ENCODE measurements at regions of chr6 and their contacts with region 1.

Region 1: GRCh38 chr6:15776458-15776980 is 113.7 kb upstream of the DTNBP1 start:
- DNase-seq: peak; percentile 71
- H3K4me3 Mint-ChIP-seq: no peak overlapping the region
- H3K27ac Mint-ChIP-seq: peak overlapping the region; percentile 88
- H3K4me1 Mint-ChIP-seq: peaks cover 68% of the 10 kb centered on the region
- H3K27me3 Mint-ChIP-seq: peaks cover 3% of the 10 kb centered on the region

Region 2: GRCh38 chr6:15691250-15691869 is 85.2 kb before region 1 on chr6:
- CTCF ChIA-PET with region 1: interaction called, 14 read pairs
- POLR2A ChIA-PET with region 1: no interaction called
- intact Hi-C with region 1: loop called (anchors 2 kb)
- DNase-seq: peak; percentile 87
- H3K4me3 Mint-ChIP-seq: peak overlapping the region; percentile 43
- H3K27ac Mint-ChIP-seq: peak overlapping the region; percentile 43
- H3K4me1 Mint-ChIP-seq: peaks cover 8% of the 10 kb centered on the region
- H3K27me3 Mint-ChIP-seq: peaks cover 7% of the 10 kb centered on the region

Region 3: GRCh38 chr6:15735567-15736265 is 40.8 kb before region 1 on chr6:
- CTCF ChIA-PET with region 1: interaction called, 6 read pairs
- POLR2A ChIA-PET with region 1: interaction called, 3 read pairs
- intact Hi-C with region 1: loop called (anchors 1 kb)
- DNase-seq: peak; percentile 30
- H3K4me3 Mint-ChIP-seq: no peak overlapping the region
- H3K27ac Mint-ChIP-seq: peak overlapping the region; percentile 82
- H3K4me1 Mint-ChIP-seq: peaks cover 49% of the 10 kb centered on the region
- H3K27me3 Mint-ChIP-seq: peaks cover 8% of the 10 kb centered on the region

Region 4: GRCh38 chr6:15901141-15902115 is 124.9 kb after region 1 on chr6:
- CTCF ChIA-PET with region 1: no interaction called
- POLR2A ChIA-PET with region 1: no interaction called
- intact Hi-C with region 1: loop called (anchors 1 kb)
- DNase-seq: peak; percentile 57
- H3K4me3 Mint-ChIP-seq: no peak overlapping the region
- H3K27ac Mint-ChIP-seq: peak overlapping the region; percentile 60
- H3K4me1 Mint-ChIP-seq: peaks cover 25% of the 10 kb centered on the region
- H3K27me3 Mint-ChIP-seq: peaks cover 9% of the 10 kb centered on the region

Region 5: DNA sequence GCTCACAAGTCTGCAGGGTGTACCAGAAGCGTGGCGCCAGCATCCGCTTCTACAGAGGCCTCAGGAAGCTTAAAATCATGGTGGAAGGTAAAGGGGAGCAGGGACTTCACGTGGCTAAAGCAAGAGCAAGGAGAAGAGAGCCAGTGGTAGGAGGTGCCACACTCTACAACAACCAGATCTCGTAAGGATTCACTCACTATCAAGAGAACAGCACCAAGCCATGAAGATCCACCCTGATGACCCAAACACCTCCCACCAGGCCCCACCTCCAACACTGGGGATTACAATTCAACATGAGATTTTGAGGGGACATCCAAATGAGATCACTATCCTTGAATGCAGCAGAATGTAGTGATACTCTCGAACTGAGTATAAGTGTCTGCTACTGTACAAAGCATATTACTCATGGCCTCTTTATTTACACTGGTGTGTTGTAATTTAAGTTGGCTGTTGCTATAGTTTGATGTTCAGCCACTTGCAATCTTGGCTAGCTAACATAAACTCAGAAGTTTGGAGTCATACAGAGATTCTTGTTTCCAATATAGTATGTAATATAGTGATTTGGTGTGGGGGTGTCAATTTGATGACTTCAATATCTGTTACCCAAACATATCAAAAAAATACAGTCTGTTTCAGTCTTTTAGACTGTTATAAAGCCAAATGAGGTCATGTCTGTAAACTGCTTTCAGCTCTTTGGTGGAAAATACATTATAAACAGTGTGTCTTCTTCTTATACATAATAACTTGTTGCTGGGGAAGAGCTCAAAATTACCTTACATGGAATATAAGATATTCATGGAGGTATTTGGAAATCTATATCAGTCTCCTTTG is 312.9 kb after region 1 on chr6:
- CTCF ChIA-PET with region 1: no interaction called
- POLR2A ChIA-PET with region 1: no interaction called
- intact Hi-C with region 1: loop called (anchors 1 kb)
- DNase-seq: peak; percentile 40
- H3K4me3 Mint-ChIP-seq: no peak overlapping the region
- H3K27ac Mint-ChIP-seq: no peak overlapping the region
- H3K4me1 Mint-ChIP-seq: peaks cover 7% of the 10 kb centered on the region
- H3K27me3 Mint-ChIP-seq: peaks cover 13% of the 10 kb centered on the region

Region 6: GRCh38 chr6:16183187-16183664 is 406.7 kb after region 1 on chr6:
- CTCF ChIA-PET with region 1: interaction called, 4 read pairs
- POLR2A ChIA-PET with region 1: no interaction called
- intact Hi-C with region 1: loop called (anchors 5 kb)
- DNase-seq: no peak
- H3K4me3 Mint-ChIP-seq: no peak overlapping the region
- H3K27ac Mint-ChIP-seq: no peak overlapping the region
- H3K4me1 Mint-ChIP-seq: peaks cover 20% of the 10 kb centered on the region
- H3K27me3 Mint-ChIP-seq: no peaks in the 10 kb centered on the region

Measured in activated CD4-positive, alpha-beta memory T cell treated with anti-CD3 and anti-CD28 coated beads for 36 hours (primary cell).